ENCODE measurements at regions of chr5 and their contacts with region 1.

Region 1: GRCh38 chr5:149561848-149562247 is 10.6 kb upstream of the CSNK1A1 start:
- DNase-seq: no peak
- ATAC-seq: peak; percentile 69

Region 2: DNA sequence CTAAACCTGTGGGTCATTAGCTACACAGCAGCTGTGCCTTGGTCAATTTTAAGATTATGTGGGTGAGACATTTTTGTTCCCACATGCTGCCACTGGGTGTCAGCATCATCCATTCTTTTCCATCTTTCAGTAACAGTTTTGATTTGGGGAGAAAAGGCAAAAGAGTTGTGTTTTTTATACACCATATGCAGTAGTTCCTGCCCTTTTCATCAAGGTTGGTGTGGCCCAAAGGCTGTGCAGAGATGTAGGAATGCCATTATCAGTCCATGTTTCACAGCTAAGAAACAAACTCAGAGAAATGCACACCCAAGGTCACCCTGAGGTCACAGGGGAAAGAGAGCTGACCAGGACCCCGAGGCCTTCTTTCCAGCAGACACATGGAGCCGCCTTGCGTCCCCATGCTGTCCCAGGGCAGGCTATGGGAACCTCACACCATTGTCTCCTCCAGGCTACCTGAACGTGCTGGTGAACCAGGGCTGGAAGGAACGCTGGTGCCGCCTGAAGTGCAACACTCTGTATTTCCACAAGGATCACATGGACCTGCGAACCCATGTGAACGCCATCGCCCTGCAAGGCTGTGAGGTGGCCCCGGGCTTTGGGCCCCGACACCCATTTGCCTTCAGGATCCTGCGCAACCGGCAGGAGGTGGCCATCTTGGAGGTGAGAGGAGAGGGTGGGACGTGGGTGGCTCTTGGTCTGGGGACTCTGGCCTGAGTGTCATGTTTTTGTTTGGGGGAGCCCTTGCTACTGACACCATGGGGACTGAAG is 244.4 kb before region 1 on chr5:
- intact Hi-C with region 1: loop called (anchors 5 kb)
- DNase-seq: no peak
- ATAC-seq: no peak

Region 3: DNA sequence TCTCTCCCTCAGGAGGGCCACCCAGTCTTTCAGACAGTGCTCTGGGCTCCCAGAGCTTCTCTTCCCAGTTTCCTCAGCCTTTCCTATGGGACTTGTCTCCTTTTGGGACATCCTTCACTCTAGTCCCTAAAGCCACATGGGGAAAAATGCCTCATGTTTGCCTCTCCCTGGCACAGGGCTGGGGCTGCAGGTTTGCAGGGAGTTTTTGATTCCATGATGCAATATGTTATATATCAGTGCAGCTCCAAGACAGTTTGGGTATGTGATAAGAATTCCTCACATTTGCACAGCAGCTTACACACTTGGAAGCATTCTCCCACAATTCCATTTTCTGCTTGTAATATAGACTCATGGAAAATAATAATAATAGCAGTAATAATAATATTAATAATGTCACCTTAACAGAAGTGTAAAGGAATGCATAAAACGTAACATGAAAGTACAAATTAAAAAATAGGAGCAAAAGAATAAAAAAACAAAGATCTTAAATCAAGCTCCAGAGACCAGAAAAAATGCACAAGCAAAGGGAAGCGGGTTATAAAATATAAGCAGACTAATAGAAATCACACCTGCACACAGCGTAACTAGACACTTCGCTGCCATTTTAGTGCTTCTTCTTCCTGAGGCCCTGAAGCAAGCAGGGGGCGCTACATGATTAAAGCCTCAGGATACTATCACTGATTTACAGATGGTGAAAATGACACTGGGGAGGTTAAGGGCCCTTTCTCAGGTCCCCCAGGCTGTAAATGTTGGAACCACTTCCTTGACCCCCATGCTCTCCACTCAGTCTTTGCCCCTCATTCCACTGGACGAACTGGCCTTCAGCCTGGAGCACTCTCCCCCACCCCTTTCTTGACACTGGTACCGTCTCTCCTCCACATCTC is 112.8 kb before region 1 on chr5:
- intact Hi-C with region 1: loop called (anchors 5 kb)
- DNase-seq: no peak
- ATAC-seq: no peak

Region 4: GRCh38 chr5:149960272-149961185 is 398.7 kb after region 1 on chr5 and contains the start of gene SLC26A2:
- intact Hi-C with region 1: no loop called
- DNase-seq: peak; percentile 98
- ATAC-seq: peak; percentile 100
- total RNA-seq, gene SLC26A2: 15.8 TPM

Measured in sciatic nerve (tissue), 2 donors.